ENCODE measurements at regions of chr12 and their contacts with region 1.

Region 1: DNA sequence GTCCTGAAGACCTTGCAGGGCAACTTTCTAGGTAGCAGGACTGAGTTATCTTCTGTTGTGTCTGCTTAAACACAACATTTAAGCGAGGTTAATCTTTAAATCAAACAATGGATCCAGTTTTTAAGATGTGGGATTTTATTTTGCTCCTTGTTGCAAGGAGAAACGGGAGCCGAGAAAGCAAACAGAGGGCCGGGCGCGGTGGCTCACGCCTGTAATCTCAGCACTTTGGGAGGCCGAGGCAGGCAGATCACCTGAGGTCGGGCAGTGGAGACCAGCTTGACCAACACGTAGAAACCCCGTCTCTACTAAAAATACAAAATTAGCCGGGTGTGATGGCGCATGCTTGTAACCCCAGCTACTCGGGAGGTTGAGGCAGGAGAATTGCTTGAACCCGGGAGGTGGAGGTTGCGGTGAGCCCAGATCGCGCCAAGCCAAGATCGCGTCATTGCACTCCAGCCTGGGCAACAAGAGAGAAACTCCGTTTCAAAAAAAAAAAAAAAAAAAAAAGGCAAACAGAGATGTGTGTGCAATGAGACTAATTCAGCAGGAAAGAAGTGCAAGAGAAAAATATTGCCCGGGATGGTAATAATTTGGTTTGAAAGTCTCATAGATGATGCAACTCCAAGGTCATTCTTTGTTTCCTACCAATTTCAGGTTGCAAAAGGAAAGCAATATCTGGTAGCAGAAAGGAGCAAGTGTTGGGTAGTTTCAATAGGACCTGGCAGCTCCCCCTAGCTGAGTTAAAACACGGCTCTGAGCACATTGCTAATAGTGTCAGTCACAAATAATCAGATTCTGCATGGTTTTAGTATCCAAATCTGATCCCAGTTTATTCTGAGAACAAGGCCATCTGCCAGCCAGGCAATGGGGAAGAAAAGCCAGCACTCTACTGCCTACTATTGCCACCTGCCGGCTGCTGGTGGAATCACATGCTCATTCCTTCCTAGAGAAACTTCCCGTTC is 141.4 kb downstream of the PPM1H start:
- DNase-seq: peak; percentile 74
- H3K4me3 ChIP-seq: no peak overlapping the region
- H3K27ac ChIP-seq: no peak overlapping the region
- H3K4me1 ChIP-seq: no peaks in the 10 kb centered on the region
- H3K27me3 ChIP-seq: no peaks in the 10 kb centered on the region
- CTCF ChIP-seq: peak; percentile 91 to 95 (median 94)
- POLR2A ChIP-seq: no peak

Region 2: DNA sequence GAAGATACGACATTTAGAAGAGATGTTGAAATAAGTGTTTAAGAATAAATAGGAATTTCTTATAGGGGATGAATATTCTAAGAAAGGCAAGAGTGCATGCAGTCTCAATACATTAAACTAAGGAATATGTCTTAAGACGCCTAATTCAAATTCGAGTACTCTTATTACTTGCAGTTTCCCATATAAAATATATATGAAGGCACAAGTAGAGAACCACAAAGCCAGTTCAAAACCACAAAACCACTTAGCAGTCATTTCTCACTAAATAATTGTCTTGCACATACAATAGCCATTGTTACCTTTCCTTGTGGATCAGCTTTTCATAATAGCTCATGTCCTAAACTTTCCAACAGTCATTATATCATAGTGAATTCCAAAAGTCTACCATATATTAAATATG is 417.9 kb before region 1 on chr12:
- intact Hi-C with region 1: no loop called
- DNase-seq: no peak
- H3K4me3 ChIP-seq: no peak overlapping the region
- H3K27ac ChIP-seq: no peak overlapping the region
- H3K4me1 ChIP-seq: no peaks in the 10 kb centered on the region
- H3K27me3 ChIP-seq: no peaks in the 10 kb centered on the region
- CTCF ChIP-seq: no peak
- POLR2A ChIP-seq: no peak

Region 3: DNA sequence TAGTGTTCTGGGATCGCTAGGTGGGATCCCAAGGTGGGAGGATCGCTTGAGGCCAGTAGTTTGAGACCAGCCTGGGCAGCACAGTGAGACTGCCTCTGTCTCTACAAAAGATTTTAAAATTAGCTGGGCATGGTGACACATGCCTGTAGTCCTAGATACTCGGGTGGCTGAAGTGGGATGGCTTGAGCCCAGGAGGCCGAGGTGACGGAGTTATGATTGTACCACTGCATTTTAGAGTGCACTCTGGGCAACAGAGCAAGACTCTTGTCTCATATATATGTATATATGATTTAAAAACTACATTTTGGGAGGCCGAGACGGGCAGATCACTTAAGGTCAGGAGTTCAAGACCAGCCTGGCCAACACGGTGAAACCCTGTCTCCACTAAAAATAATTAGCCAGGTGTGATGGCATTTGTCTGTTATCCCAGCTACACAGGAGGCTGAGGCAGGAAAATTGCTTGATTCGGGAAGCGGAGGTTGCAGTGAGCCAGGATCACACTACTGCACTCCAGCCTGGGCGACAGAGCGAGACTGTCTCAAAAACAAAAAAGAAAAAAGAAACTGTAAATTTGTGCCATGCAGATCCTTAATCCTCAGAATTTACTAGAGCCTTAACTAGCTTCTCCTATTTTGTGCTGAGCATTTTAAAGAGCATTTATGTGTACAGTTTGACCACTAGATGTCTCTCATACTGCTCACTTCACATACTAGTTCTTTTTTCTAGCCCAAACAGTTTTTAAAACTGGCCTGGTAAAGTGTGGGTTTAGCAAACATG is 212.1 kb before region 1 on chr12:
- intact Hi-C with region 1: loop called (anchors 2 kb)
- DNase-seq: no peak
- H3K4me3 ChIP-seq: no peak overlapping the region
- H3K27ac ChIP-seq: no peak overlapping the region
- H3K4me1 ChIP-seq: no peaks in the 10 kb centered on the region
- H3K27me3 ChIP-seq: no peaks in the 10 kb centered on the region
- CTCF ChIP-seq: peak in 3 of 4 experiments; percentile 59 to 78 (median 72)
- POLR2A ChIP-seq: no peak

Region 4: GRCh38 chr12:62603061-62603810 is 190.3 kb before region 1 on chr12:
- intact Hi-C with region 1: loop called (anchors 5 kb)
- DNase-seq: peak; percentile 86
- H3K4me3 ChIP-seq: peak overlapping the region; percentile 63 to 85
- H3K27ac ChIP-seq: peak overlapping the region; percentile 99
- H3K4me1 ChIP-seq: no peaks in the 10 kb centered on the region
- H3K27me3 ChIP-seq: no peaks in the 10 kb centered on the region
- CTCF ChIP-seq: peak; percentile 15 to 80 (median 60)
- POLR2A ChIP-seq: peak; percentile 14

Region 5: GRCh38 chr12:62724947-62725447 is 68.5 kb before region 1 on chr12:
- intact Hi-C with region 1: no loop called
- DNase-seq: peak; percentile 73
- H3K4me3 ChIP-seq: no peak overlapping the region
- H3K27ac ChIP-seq: no peak overlapping the region
- H3K4me1 ChIP-seq: no peaks in the 10 kb centered on the region
- H3K27me3 ChIP-seq: no peaks in the 10 kb centered on the region
- CTCF ChIP-seq: no peak
- POLR2A ChIP-seq: no peak

Measured in prostate gland (tissue), 2 donors.